ENCODE measurements at regions of chr9 and their contacts with region 1.

Region 1: DNA sequence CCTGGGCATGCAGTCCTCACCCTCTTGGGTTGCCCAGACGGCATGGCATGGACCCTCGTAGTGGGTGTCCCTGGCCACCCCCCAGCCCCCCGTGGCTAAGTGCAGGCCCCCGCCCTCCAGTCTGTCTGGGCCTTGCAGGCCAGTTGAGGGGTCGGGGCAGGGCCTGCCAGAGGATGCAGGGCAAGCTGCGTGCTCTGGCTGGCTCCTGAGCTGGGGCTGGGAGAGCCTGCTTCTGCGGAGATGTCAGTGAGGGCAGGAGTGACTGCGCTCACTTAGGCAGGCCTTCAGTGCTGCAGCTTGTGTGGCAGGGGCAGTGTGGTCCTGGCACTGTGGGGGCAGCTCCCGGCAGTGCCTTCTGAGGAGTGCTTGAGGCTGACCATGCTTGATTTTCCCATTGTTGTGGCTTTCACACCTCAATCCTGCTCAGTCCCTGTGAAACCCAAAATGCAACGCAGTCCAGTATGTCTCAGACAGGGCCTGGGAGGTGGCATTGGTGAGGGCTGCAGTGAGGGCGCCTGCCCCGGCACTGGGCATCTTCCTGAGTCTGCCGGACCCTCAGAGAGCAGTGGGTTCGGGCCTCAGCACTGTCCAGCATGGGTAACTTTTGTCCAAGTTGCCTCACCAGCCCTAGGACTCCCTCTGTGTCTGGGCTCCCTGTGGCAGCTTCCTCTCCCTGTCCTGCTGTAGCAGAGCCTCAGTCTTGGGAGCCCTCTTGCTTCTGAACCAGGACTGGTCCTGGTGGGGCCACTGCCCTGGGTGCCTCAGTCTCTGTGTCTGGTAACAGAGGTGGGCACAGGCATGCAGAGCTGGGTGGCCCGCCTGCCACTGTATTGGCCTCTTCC is 93.0 kb downstream of the PHF2 start:
- DNase-seq: no peak
- ATAC-seq: peak; percentile 24; the same call in 1 of the 2 replicates
- H3K4me3 ChIP-seq: no peak overlapping the region
- H3K27ac ChIP-seq: no peak overlapping the region
- H3K4me1 ChIP-seq: no peaks in the 10 kb centered on the region
- H3K27me3 ChIP-seq: no peaks in the 10 kb centered on the region
- CTCF ChIP-seq: no peak
- POLR2A ChIP-seq: no peak
- RAD21 ChIP-seq: no peak

Region 2: GRCh38 chr9:93575796-93576257 is 93.5 kb before region 1 on chr9:
- CTCF ChIA-PET with region 1: no interaction called
- POLR2A ChIA-PET with region 1: no interaction called
- dilution Hi-C with region 1: no loop called
- in situ Hi-C with region 1: no loop called
- intact Hi-C with region 1: loop called (anchors 5 kb)
- DNase-seq: peak; percentile 16
- ATAC-seq: peak; percentile 32
- H3K4me3 ChIP-seq: peak overlapping the region; percentile 52
- H3K27ac ChIP-seq: peak overlapping the region; percentile 77
- H3K4me1 ChIP-seq: peaks cover 23% of the 10 kb centered on the region
- H3K27me3 ChIP-seq: no peaks in the 10 kb centered on the region
- CTCF ChIP-seq: no peak
- POLR2A ChIP-seq: 0 out of 2 replicates have a peak, but pooled peaks have one; percentile 44
- RAD21 ChIP-seq: no peak

Region 3: DNA sequence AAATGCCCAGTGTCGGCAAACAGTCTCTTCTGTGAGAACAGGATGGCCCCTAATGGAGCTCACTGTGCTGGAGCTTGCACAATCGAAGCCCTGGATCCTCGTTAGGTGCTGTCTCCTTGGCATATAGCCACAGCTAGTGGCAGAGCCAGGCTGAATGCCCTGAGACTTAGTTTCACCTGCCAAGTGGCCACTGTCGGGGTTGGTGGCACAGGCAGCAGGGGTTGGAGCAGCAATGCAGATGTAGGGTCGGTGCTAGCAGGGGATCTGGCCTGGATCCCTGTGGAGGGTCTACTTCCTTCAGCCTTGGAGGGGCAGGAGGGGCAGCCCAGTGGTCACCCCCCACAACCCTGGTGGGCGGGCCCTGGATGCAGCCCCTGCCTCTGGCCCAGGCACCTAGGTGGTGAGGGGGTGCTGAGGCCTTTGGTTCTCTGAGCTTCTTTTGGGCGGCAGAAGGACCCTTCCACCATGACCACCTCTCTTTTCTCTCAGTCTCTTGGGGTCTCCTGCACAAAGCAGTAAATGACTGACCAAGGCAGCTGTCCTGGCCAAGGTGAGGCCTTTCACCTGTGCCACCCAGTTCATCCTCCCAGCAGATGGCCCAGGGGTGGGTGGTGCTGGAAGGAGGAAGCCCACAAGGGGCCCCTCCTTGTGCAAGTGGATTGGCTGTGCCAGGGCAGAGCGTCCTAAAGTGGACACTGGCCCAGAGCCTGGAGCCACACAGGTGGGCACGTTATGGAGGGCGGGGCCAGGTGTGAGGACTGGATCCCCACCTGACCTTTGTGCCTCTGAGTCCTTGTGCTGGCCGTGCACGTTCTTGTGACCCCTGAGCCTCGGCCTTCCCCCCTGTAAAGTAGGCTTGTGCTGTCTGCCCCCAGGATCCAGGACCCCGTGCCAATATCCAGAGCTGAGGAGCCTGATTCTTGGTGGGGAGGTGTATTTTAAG is 48.2 kb before region 1 on chr9:
- CTCF ChIA-PET with region 1: no interaction called
- POLR2A ChIA-PET with region 1: no interaction called
- dilution Hi-C with region 1: no loop called
- in situ Hi-C with region 1: no loop called
- intact Hi-C with region 1: no loop called
- DNase-seq: no peak
- ATAC-seq: no peak
- H3K4me3 ChIP-seq: no peak overlapping the region
- H3K27ac ChIP-seq: no peak overlapping the region
- H3K4me1 ChIP-seq: no peaks in the 10 kb centered on the region
- H3K27me3 ChIP-seq: no peaks in the 10 kb centered on the region
- CTCF ChIP-seq: no peak
- POLR2A ChIP-seq: no peak
- RAD21 ChIP-seq: no peak

Measured in IMR-90 (cell line).